ENCODE measurements at regions of chr3 and their contacts with region 1.

Region 1: GRCh38 chr3:28476194-28476593 is 127.6 kb upstream of the AZI2 start:
- DNase-seq: no peak
- H3K4me3 ChIP-seq: no peak overlapping the region
- H3K27ac ChIP-seq: no peak overlapping the region
- H3K4me1 ChIP-seq: no peaks in the 10 kb centered on the region
- H3K27me3 ChIP-seq: no peaks in the 10 kb centered on the region
- CTCF ChIP-seq: peak; percentile 45 to 52

Region 2: DNA sequence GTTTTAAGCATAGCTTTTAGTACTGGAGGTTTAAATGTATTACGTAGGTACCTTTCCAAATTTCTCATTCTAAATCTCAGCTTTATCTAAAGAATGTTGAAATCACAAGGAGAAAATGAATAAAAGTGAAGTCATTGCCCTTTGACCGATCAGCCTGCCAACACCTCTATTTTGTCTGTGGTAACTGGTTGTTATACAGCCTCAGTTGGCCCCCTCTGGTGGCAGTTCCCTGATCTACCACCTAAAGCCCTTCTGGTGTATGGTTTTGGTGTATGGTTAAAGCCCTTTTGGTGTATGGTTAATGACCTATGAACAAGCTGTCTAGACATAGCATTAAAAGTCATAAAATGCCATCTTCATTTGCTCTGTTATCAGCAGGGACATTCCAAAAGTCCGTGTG is 250.6 kb after region 1 on chr3:
- intact Hi-C with region 1: loop called (anchors 5 kb)
- DNase-seq: peak; percentile 34 to 65
- H3K4me3 ChIP-seq: no peak overlapping the region
- H3K27ac ChIP-seq: no peak overlapping the region
- H3K4me1 ChIP-seq: no peaks in the 10 kb centered on the region
- H3K27me3 ChIP-seq: no peaks in the 10 kb centered on the region
- CTCF ChIP-seq: peak; percentile 40 to 49